ENCODE measurements at regions of chr2 and their contacts with region 1.

Region 1: GRCh38 chr2:5691975-5692529 is at the start of gene SOX11:
- DNase-seq: peak in 1 of 2 donors; percentile 71
- H3K4me3 ChIP-seq: peak within 1 kb of the TSS; percentile 18 to 62 (median 45)
- H3K27ac ChIP-seq: no peak within 1 kb of the TSS
- H3K4me1 ChIP-seq: peaks cover 13 to 15% of the 10 kb centered on the region in 2 donors
- H3K27me3 ChIP-seq: peaks cover 3 to 81% of the 10 kb centered on the region in 2 donors
- CTCF ChIP-seq: no peak
- POLR2A ChIP-seq: no peak
- total RNA-seq, gene SOX11: 0.15 to 0.33 TPM in 2 of 3 donors, not detected in the other

Region 2: DNA sequence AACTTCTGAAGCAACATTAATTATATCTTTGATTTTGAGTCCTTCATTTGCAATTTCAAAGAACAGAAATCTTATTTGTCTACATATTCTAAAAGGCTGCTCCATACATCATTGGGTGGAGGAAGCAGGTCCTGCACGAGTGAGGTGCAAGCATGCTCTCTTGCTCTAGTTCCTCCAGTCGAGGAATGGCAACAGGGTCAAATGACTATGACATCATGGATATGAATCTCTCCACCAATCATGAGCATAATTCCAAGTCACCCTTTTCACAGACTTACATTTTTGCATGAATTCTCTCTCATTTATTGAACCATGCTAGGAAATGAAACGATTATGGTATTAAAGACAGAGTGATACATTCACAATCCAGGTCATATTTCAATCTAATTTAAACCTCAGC is 608.6 kb before region 1 on chr2:
- intact Hi-C with region 1: loop called (anchors 5 kb)
- DNase-seq: no peak
- H3K4me3 ChIP-seq: no peak overlapping the region
- H3K27ac ChIP-seq: no peak overlapping the region
- H3K4me1 ChIP-seq: no peaks in the 10 kb centered on the region
- H3K27me3 ChIP-seq: no peaks in the 10 kb centered on the region
- CTCF ChIP-seq: no peak
- POLR2A ChIP-seq: no peak

Region 3: GRCh38 chr2:7209757-7210555 is 1517.9 kb after region 1 on chr2:
- intact Hi-C with region 1: loop called (anchors 5 kb)
- DNase-seq: no peak
- H3K4me3 ChIP-seq: no peak overlapping the region
- H3K27ac ChIP-seq: no peak overlapping the region
- H3K4me1 ChIP-seq: no peaks in the 10 kb centered on the region
- H3K27me3 ChIP-seq: no peaks in the 10 kb centered on the region
- CTCF ChIP-seq: no peak
- POLR2A ChIP-seq: no peak

Measured in breast epithelium (tissue), 4 donors.